ENCODE measurements at regions of chr9 and their contacts with region 1.

Region 1: DNA sequence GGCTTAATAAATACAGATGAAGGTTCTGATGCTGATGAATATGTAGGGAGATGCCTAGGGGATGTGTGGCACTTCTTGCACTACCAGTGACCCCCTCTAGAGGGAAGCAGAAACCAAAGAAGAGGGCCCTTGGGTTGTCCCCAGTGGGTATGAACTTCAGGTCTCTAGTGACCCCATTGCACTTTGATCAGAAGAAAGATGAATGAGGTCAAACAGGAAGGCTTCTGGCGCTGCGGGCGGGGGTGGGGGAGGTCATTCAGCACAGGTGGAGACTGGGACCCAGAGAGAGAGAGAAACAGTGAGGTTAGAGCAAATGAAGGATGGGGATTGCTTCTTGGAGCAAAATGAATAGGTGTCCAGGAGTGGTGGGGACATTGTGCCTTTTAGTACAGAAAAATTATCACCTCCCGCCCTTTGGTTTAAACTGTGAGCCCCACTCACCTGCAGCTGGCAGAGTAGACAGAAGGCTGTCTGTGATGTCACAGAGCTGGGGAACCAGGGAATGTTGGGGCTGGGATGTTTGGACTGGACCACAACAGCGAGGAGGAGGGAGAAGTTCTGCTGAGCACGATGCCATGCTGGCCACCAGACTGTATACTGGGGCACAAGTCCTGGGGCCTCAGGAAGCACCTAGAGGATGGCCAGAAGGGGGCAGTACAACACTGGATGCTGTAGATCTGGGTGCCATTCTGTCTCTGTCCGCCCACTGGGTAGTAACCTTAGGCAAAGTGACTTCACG is at the start of gene TEX48:
- DNase-seq: peak; percentile 93
- ATAC-seq: peak; percentile 95
- H3K4me3 Mint-ChIP-seq: peak within 1 kb of the TSS; percentile 56
- H3K27ac Mint-ChIP-seq: peak within 1 kb of the TSS; percentile 94
- H3K4me1 Mint-ChIP-seq: peaks cover 60% of the 10 kb centered on the region
- H3K27me3 Mint-ChIP-seq: peaks cover 20% of the 10 kb centered on the region
- total RNA-seq, gene TEX48: 0.73 to 1.6 TPM

Region 2: GRCh38 chr9:114696814-114697544 is 15.2 kb after region 1 on chr9:
- CTCF ChIA-PET with region 1: interaction called, 31 read pairs
- DNase-seq: peak; percentile 95
- ATAC-seq: peak; percentile 74
- H3K4me3 Mint-ChIP-seq: peak overlapping the region; percentile 51
- H3K27ac Mint-ChIP-seq: peak overlapping the region; percentile 98
- H3K4me1 Mint-ChIP-seq: peaks cover 86% of the 10 kb centered on the region
- H3K27me3 Mint-ChIP-seq: peaks cover 26% of the 10 kb centered on the region

Region 3: DNA sequence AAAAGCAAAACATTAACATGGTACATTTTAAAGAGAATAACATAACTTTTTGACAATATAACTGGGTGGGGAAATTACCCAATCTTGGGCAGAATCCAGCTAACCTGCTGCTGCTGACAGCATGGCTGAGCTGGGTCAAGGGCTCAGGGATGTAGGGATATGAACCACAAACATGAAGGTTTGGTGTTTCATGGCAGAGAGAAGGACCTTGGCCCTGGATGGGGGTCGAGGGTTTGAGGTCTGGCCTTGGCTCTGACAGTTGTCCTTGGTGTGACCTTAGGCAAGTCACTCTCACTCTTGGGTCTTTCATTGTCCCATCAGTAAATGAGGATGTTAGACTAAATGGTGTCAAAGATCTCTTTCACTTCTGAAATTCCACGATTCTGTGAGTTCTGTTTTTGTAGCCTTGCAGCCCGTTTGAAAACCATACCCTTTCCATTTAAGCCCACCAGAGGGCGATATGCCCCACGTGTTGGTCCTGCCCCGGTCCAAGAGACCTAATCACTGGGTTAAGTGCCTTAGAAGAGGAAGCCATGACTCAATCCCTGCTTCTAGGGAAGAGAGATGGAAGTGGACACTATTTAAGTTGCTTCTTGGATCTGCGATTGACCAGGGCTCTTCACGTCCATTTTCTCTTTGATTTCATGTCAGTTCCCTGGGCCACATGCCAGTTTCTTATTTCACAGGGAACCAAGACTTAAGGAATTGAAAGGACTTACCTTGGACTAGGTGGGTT is 57.0 kb after region 1 on chr9:
- CTCF ChIA-PET with region 1: interaction called, 164 read pairs
- DNase-seq: peak; percentile 84
- ATAC-seq: peak; percentile 83
- H3K4me3 Mint-ChIP-seq: no peak overlapping the region
- H3K27ac Mint-ChIP-seq: peak overlapping the region; percentile 89
- H3K4me1 Mint-ChIP-seq: peaks cover 58% of the 10 kb centered on the region
- H3K27me3 Mint-ChIP-seq: peaks cover 5% of the 10 kb centered on the region

Region 4: DNA sequence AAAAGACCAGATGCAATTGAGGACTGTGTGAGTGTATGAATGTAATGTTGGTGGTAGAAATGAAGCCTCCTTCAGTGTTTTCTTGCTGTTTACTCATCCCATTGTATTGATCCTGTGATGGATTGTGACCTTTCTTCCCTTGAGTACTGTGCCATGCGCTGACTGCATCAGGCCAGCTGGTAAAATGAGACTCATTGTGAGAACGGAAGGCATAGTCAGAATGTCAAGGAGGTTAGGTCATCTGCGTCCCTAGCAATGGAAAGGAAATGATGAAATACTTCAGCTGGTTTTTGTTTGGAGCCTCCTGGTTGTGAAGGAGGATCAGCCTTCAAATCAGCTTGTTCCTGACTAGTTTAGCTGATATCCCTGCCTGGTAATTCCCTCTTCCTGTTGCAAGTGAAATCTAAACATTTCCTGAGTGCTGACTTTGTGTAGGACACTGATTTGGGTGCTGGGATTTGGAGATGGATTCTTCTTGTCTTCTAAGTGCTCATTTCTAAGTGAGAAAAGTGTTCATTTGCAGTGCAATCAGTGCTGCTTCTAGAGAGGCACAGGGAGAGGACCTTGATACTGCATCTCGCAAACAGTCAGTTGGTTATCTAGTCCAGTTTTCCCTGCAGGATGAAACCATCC is 213.2 kb after region 1 on chr9:
- CTCF ChIA-PET with region 1: interaction called, 40 read pairs
- DNase-seq: peak; percentile 82
- ATAC-seq: peak; percentile 72
- H3K4me3 Mint-ChIP-seq: no peak overlapping the region
- H3K27ac Mint-ChIP-seq: peak overlapping the region; percentile 88
- H3K4me1 Mint-ChIP-seq: peaks cover 50% of the 10 kb centered on the region
- H3K27me3 Mint-ChIP-seq: no peaks in the 10 kb centered on the region

Region 5: DNA sequence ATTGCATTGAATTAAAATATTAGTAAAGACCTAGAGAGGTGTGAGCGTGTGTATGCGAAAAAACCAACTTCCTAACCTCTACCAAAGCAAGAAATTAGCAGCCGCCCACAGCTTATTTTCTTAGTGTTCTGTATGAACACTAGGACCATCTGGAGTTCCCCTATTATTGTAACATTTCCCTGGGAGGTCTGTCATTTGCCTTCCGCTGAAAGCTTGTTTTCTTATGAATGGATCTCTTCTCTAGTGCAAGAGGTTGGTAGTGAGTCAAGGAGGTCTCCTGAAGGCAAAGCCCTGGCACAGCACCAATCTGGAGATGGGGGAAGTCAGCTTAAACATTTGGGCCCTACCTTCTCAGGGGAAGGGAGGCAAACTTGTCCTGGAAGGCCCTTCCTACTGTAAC is 237.8 kb after region 1 on chr9:
- CTCF ChIA-PET with region 1: interaction called, 14 read pairs
- DNase-seq: no peak
- ATAC-seq: no peak
- H3K4me3 Mint-ChIP-seq: no peak overlapping the region
- H3K27ac Mint-ChIP-seq: peak overlapping the region; percentile 41
- H3K4me1 Mint-ChIP-seq: peaks cover 59% of the 10 kb centered on the region
- H3K27me3 Mint-ChIP-seq: no peaks in the 10 kb centered on the region

Region 6: DNA sequence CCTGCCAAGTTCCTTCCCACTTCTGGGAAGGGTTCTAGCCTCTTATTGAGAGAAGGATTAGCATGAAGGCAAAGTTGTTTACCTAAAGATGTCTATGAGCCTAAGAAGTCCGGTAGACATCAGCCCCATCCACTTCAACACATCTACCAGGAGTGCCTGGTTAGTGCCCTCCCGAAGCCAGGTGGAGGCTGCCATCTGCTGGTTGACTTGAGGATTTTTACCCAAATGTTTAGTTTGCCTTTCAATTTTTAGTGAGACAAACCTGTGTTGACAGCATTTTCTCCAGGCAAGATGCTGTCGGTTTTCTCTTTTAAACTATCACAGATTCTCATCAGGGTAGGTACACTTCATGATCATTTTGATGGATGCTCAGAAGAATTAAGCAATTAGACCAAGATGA is 332.2 kb after region 1 on chr9:
- CTCF ChIA-PET with region 1: interaction called, 186 read pairs
- DNase-seq: peak; percentile 88
- ATAC-seq: peak; percentile 97
- H3K4me3 Mint-ChIP-seq: no peak overlapping the region
- H3K27ac Mint-ChIP-seq: peak overlapping the region; percentile 47
- H3K4me1 Mint-ChIP-seq: peaks cover 37% of the 10 kb centered on the region
- H3K27me3 Mint-ChIP-seq: peaks cover 22% of the 10 kb centered on the region

Measured in activated CD8-positive, alpha-beta memory T cell treated with anti-CD3 and anti-CD28 coated beads, Interleukin-2, amount 10 ng/mL, durations not matched to agents 7 days and 5 days (primary cell).